Heart right ventricle (tissue), 16 donors: ENCODE measurements at regions of chr3 and their contacts with region 1.

Region 1: GRCh38 chr3:139935016-139935865 is at the start of gene CLSTN2:
- DNase-seq: peak; percentile 64 to 78
- ATAC-seq: peak; percentile 82 to 91 (median 88)
- H3K4me3 ChIP-seq: peak within 1 kb of the TSS; percentile 44 to 62 (median 58)
- H3K27ac ChIP-seq: peak within 1 kb of the TSS in 2 of 10 donors; percentile 15 to 57
- H3K4me1 ChIP-seq: peaks cover 0 to 24% (median 14%) of the 10 kb centered on the region in 9 donors
- H3K27me3 ChIP-seq: peaks cover 0 to 66% (median 16%) of the 10 kb centered on the region in 7 donors
- CTCF ChIP-seq: peak in 2 of 9 donors; percentile 3 to 18
- total RNA-seq, gene CLSTN2: 1.5 to 10.7 (median 5.5) TPM

Region 2: DNA sequence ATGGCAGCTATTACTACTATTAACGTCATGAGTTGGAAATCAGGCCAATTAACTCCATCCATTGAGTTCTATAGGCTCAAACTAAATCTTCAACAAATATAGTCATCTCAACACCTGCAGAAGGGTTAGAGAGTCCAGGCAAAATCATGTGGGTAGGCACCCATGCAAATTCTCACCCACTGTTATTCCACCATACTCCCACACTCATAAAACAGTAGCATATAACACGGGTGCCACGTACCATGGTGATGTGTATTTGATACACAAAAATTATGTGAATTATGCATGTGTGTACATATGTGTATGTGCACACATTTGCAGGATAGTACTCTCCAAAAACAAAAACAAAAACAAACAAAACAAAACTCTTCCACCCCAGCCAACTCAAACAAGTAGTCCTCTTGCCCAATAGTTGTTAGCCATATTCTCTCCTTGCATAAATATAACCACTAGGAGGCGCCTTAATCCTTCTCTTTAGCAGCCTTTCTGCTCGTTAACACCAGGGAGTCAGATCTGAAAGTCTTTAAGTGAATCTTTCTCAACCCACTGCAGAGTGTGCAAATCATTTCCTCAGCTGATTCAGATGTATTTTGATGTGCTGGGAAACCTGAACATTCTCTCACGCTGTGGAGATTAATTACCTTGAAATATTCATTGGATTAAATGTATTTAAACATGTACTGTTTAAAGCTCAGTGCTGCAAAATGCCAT is 507.8 kb before region 1 on chr3:
- intact Hi-C with region 1: loop called in 8 of 10 experiments (anchors 5 to 10 kb)
- DNase-seq: peak in 1 of 2 donors; percentile 40
- ATAC-seq: peak in 7 of 8 donors; percentile 73 to 93 (median 83)
- H3K4me3 ChIP-seq: no peak overlapping the region
- H3K27ac ChIP-seq: no peak overlapping the region
- H3K4me1 ChIP-seq: peaks cover 0 to 6% (median 0%) of the 10 kb centered on the region in 9 donors
- H3K27me3 ChIP-seq: no peaks in the 10 kb centered on the region
- CTCF ChIP-seq: peak; percentile 77 to 89 (median 84)

Region 3: GRCh38 chr3:139574026-139574947 is 361.0 kb before region 1 on chr3:
- intact Hi-C with region 1: loop called in 2 of 10 experiments (anchors 10 kb)
- DNase-seq: peak; percentile 70 to 76
- ATAC-seq: peak in 5 of 8 donors; percentile 63 to 84 (median 71)
- H3K4me3 ChIP-seq: no peak overlapping the region
- H3K27ac ChIP-seq: no peak overlapping the region
- H3K4me1 ChIP-seq: peaks cover 2 to 37% (median 21%) of the 10 kb centered on the region in 9 donors
- H3K27me3 ChIP-seq: no peaks in the 10 kb centered on the region
- CTCF ChIP-seq: peak in 1 of 9 donors; percentile 15

Region 4: GRCh38 chr3:139718415-139718814 is 216.8 kb before region 1 on chr3:
- intact Hi-C with region 1: loop called in 8 of 10 experiments (anchors 2 to 10 kb)
- DNase-seq: peak; percentile 18 to 45
- ATAC-seq: peak in 6 of 8 donors; percentile 67 to 74 (median 71)
- H3K4me3 ChIP-seq: no peak overlapping the region
- H3K27ac ChIP-seq: no peak overlapping the region
- H3K4me1 ChIP-seq: peaks cover 0 to 10% (median 0%) of the 10 kb centered on the region in 9 donors
- H3K27me3 ChIP-seq: peaks cover 0 to 5% (median 0%) of the 10 kb centered on the region in 7 donors
- CTCF ChIP-seq: peak; percentile 23 to 67 (median 51)

Region 5: GRCh38 chr3:140505213-140505612 is 570.0 kb after region 1 on chr3:
- intact Hi-C with region 1: loop called in 1 of 10 experiments (anchors 2 kb)
- DNase-seq: peak in 1 of 2 donors; percentile 6
- ATAC-seq: peak in 7 of 8 donors; percentile 34 to 68 (median 54)
- H3K4me3 ChIP-seq: no peak overlapping the region
- H3K27ac ChIP-seq: no peak overlapping the region
- H3K4me1 ChIP-seq: peaks cover 0 to 21% (median 3%) of the 10 kb centered on the region in 9 donors
- H3K27me3 ChIP-seq: peaks cover 0 to 15% (median 0%) of the 10 kb centered on the region in 7 donors
- CTCF ChIP-seq: no peak